ENCODE measurements at regions of chr10 and their contacts with region 1.

Region 1: GRCh38 chr10:97553575-97554031 is 19.0 kb upstream of the ANKRD2 start:
- DNase-seq: no peak
- H3K4me3 ChIP-seq: no peak overlapping the region
- H3K27me3 ChIP-seq: no peaks in the 10 kb centered on the region
- CTCF ChIP-seq: peak; percentile 96

Region 2: GRCh38 chr10:97407211-97407951 is 146.2 kb before region 1 on chr10:
- CTCF ChIA-PET with region 1: interaction called, 26 read pairs
- POLR2A ChIA-PET with region 1: no interaction called
- DNase-seq: no peak
- H3K4me3 ChIP-seq: no peak overlapping the region
- H3K27me3 ChIP-seq: no peaks in the 10 kb centered on the region
- CTCF ChIP-seq: peak; percentile 77

Region 3: GRCh38 chr10:97463363-97464132 is 90.1 kb before region 1 on chr10:
- CTCF ChIA-PET with region 1: interaction called, 104 read pairs
- POLR2A ChIA-PET with region 1: no interaction called
- DNase-seq: peak; percentile 77
- H3K4me3 ChIP-seq: no peak overlapping the region
- H3K27me3 ChIP-seq: no peaks in the 10 kb centered on the region
- CTCF ChIP-seq: peak; percentile 80

Region 4: GRCh38 chr10:97498076-97498840 is 55.3 kb before region 1 on chr10 and contains the start of gene MMS19:
- CTCF ChIA-PET with region 1: interaction called, 19 read pairs
- POLR2A ChIA-PET with region 1: no interaction called
- DNase-seq: peak; percentile 94
- H3K4me3 ChIP-seq: peak within 1 kb of the TSS; percentile 74
- H3K27me3 ChIP-seq: no peaks in the 10 kb centered on the region
- CTCF ChIP-seq: no peak
- polyA plus RNA-seq, gene MMS19: 71.1 and 97.5 TPM in 2 replicates

Region 5: DNA sequence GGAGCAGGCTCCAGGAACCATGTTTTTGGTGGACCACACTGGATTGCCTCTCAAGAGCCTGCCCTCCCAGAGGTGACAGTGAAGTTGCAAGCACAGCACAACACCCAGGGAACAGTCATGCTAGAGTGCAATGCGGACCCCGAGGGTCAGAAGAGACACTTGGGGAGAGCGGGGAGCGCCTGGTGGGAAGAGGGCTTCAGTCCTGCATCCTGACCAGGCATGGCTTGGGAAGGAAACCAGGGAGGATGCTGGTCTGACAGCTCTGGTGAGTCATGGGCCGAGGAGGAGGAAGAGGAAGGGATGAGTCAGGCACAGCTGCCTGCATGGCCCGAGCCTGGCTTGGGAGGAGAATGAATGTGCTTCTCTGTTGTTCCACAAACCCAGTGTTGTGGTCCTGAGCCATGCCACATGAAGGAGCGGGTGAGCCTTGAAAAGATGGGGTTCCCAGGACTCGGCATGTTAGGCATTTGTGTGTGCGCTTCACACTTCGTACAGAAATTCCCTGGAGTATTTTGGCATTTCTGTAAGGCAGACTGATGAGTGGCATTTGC is 10.5 kb before region 1 on chr10:
- CTCF ChIA-PET with region 1: interaction called, 66 read pairs
- POLR2A ChIA-PET with region 1: no interaction called
- DNase-seq: peak; percentile 75
- H3K4me3 ChIP-seq: no peak overlapping the region
- H3K27me3 ChIP-seq: no peaks in the 10 kb centered on the region
- CTCF ChIP-seq: no peak

Region 6: GRCh38 chr10:97572214-97572989 is 18.8 kb after region 1 on chr10 and contains the start of gene ANKRD2:
- CTCF ChIA-PET with region 1: interaction called, 22 read pairs
- POLR2A ChIA-PET with region 1: no interaction called
- DNase-seq: no peak
- H3K4me3 ChIP-seq: no peak within 1 kb of the TSS
- H3K27me3 ChIP-seq: no peaks in the 10 kb centered on the region
- CTCF ChIP-seq: peak; percentile 95
- polyA plus RNA-seq, gene ANKRD2: 0.16 and 0.37 TPM in 2 replicates

Region 7: DNA sequence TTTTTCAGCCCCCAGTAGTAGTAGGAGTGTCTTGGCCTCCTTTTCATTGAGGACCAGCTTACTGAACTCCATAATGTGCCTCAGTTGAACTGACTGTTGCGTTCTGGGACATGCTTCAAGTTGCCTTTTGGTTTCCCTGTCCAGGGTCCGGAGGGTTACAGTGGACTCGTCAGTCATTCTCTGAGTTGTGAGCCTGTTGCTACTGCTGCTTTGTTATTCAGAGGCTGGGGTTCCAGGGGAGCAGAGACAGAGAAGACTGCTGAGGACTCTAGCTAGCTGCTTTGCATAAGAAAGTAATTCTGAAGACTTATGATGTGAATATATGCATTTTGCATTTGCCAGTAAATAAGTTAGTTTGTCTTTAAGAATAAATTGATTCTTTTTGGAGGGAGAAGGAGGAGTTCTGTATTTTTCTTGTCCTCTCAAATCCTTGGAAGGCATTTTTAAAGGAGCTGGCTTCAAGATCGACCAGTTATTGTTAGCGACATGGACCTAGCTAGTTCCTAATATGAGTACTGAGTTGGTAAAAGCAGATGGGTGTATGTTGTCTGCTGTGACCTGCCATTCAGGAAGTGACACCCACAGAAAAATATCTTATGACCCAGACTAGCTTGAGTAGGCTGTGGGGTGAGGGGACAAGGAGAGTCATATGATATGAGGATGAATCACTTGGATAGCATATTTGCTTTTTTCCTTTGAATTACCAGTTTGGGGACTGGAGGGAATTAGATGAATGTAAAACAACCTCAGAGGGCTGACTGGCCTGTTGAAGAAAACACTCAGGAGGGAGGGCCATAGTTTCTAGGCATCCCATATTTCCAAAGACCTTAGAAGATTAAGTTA is 95.2 kb after region 1 on chr10:
- CTCF ChIA-PET with region 1: no interaction called
- POLR2A ChIA-PET with region 1: no interaction called
- DNase-seq: peak; percentile 93
- H3K4me3 ChIP-seq: no peak overlapping the region
- H3K27me3 ChIP-seq: no peaks in the 10 kb centered on the region
- CTCF ChIP-seq: no peak

Region 8: DNA sequence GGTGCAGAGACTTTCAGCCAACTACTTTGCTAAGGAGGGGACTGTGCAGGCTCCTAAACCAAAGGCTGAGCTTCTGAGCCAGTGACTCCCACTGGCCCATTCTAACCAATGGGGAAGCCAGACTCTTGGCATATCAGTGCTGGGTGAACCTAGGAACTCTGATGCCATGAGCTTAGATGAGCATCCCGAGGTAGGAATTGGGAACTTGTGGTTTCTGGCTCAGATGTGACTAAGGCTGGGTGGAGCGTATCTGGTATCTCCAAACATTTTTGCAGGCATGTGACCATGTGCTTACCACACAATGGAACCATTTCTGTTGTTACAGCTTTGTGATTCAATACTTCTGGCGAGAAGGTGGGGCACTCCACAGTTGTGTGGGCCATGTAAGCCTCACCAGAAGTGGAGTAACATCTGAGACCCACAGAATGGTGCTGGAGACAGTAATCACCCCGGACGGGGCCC is 136.0 kb after region 1 on chr10:
- CTCF ChIA-PET with region 1: no interaction called
- POLR2A ChIA-PET with region 1: no interaction called
- DNase-seq: peak; percentile 96
- H3K4me3 ChIP-seq: no peak overlapping the region
- H3K27me3 ChIP-seq: no peaks in the 10 kb centered on the region
- CTCF ChIP-seq: no peak

Region 9: DNA sequence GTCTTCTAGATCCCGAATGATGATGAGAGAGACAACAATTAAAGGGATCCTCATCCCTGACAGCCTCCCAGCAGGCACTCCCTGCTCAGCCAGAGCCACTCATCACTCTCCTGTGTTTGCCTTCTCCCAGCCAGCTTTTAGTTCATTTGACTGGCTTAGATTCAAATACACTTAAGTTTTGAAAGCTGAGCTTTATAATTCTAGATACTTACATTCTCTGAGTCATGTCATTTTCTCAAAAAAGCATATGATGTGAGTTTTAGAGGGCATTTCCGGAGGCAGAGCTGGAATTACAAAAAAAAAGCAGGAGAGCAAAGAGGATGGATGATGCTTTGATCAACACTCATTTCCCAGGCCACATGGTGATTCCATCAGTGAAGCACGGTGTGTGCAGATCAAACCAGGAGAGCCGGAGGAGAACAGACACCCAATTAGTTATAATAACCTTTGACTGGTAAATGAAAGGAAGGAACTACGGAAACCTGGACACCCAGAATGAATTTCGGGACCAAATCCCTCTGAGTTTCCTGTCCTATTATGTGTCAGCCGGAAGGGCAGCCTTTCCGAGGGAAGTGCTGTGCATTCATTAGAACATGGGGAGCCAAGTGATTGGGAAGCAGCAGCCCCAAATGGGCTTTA is 974.7 kb after region 1 on chr10:
- CTCF ChIA-PET with region 1: no interaction called
- POLR2A ChIA-PET with region 1: no interaction called
- DNase-seq: peak; percentile 51
- H3K4me3 ChIP-seq: no peak overlapping the region
- H3K27me3 ChIP-seq: no peaks in the 10 kb centered on the region
- CTCF ChIP-seq: no peak